IMR-90 (cell line): ENCODE measurements at regions of chr15 and their contacts with region 1.

Region 1: GRCh38 chr15:65856821-65857455 is 12.4 kb upstream of the RAB11A start:
- DNase-seq: peak; percentile 53
- ATAC-seq: no peak; the same call in 1 of the 2 replicates
- H3K4me3 ChIP-seq: no peak overlapping the region
- H3K27ac ChIP-seq: no peak overlapping the region
- H3K4me1 ChIP-seq: no peaks in the 10 kb centered on the region
- H3K27me3 ChIP-seq: peaks cover 1% of the 10 kb centered on the region; the same call in 1 of the 2 replicates
- CTCF ChIP-seq: peak; percentile 68
- POLR2A ChIP-seq: no peak
- RAD21 ChIP-seq: peak; percentile 73

Region 2: GRCh38 chr15:65646486-65646885 is 210.5 kb before region 1 on chr15:
- CTCF ChIA-PET with region 1: interaction called, 3 read pairs
- POLR2A ChIA-PET with region 1: no interaction called
- dilution Hi-C with region 1: no loop called
- in situ Hi-C with region 1: loop called (anchors 5 kb)
- intact Hi-C with region 1: no loop called
- DNase-seq: peak; percentile 65
- ATAC-seq: peak; percentile 58
- H3K4me3 ChIP-seq: no peak overlapping the region
- H3K27ac ChIP-seq: no peak overlapping the region
- H3K4me1 ChIP-seq: peaks cover 8% of the 10 kb centered on the region
- H3K27me3 ChIP-seq: no peaks in the 10 kb centered on the region
- CTCF ChIP-seq: no peak
- POLR2A ChIP-seq: no peak
- RAD21 ChIP-seq: no peak